ENCODE measurements at regions of chr22 and their contacts with region 1.

Region 1: DNA sequence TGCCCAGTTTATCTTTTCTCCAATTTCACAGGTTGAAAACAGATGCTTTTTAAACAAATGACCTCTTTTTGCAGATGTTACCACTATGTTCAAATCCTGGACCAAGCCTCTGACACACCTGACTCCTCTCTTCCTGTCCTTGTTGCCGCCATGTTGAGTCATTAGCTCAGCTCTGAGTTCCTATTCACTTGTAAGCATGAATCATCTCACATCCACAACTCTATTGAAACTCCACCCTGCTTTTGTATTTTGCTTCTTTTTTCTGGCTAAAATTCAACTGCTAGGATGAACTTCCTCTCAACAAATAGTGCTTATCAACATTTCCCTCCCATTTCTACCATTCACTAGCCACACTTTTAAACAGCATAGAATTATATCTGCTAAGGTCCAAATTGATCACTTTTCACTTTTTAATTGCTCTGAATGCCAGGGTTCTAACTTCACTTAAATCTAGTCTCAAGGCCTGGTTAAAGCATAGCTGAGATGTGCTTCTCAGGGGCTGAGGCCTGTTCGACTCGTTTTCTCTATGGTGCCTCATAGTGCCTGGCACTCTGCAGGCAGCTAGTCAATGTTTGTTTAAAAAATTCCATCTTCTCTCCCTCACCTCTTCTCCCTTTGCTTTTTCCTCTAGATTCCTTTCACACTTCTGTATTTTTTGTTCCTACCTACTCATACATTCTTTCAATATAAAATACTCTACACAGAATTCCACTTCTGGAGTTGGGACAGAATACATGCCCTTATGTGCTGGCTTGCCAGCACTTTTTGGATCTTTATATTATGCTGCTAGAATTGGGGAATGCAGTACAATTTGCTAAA is 3.9 kb downstream of the JOSD1 start:
- DNase-seq: peak; percentile 73
- ATAC-seq: peak; percentile 74
- H3K4me3 Mint-ChIP-seq: peak overlapping the region; percentile 95
- H3K27ac Mint-ChIP-seq: peak overlapping the region; percentile 95
- H3K4me1 Mint-ChIP-seq: peaks cover 58% of the 10 kb centered on the region
- H3K27me3 Mint-ChIP-seq: no peaks in the 10 kb centered on the region

Region 2: DNA sequence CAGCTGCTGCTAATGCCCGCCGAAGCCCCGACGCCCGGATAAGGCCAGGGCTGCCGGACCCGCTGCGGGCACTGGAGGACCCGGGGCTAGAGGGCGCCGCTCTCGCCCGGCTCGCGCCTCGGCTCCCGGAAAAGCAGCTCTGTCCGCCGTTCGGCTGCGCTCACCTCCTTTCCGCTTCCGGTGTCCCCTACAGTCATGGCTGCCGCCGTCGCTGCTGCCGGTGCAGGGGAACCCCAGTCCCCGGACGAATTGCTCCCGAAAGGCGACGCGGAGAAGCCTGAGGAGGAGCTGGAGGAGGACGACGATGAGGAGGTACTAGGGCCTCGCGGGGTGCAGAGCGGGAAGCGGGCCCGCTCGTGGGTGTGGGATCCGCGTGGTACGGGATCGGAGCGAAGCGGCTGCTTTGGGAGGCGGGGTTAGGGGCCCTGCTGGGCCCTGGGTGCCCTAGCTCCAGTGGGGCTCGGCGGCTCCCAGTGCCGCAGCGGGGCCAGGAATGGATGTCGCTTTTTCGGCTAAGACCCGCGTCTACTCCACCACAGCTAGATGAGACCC is 15.0 kb before region 1 on chr22 and contains the start of gene TOMM22:
- CTCF ChIA-PET with region 1: interaction called, 34 read pairs
- POLR2A ChIA-PET with region 1: interaction called, 13 read pairs
- intact Hi-C with region 1: loop called (anchors 1 to 2 kb)
- DNase-seq: peak; percentile 92
- ATAC-seq: peak; percentile 98
- H3K4me3 Mint-ChIP-seq: peak within 1 kb of the TSS; percentile 90
- H3K27ac Mint-ChIP-seq: peak within 1 kb of the TSS; percentile 98
- H3K4me1 Mint-ChIP-seq: peaks cover 20% of the 10 kb centered on the region
- H3K27me3 Mint-ChIP-seq: no peaks in the 10 kb centered on the region
- total RNA-seq, gene TOMM22: 146 to 155 TPM

Region 3: DNA sequence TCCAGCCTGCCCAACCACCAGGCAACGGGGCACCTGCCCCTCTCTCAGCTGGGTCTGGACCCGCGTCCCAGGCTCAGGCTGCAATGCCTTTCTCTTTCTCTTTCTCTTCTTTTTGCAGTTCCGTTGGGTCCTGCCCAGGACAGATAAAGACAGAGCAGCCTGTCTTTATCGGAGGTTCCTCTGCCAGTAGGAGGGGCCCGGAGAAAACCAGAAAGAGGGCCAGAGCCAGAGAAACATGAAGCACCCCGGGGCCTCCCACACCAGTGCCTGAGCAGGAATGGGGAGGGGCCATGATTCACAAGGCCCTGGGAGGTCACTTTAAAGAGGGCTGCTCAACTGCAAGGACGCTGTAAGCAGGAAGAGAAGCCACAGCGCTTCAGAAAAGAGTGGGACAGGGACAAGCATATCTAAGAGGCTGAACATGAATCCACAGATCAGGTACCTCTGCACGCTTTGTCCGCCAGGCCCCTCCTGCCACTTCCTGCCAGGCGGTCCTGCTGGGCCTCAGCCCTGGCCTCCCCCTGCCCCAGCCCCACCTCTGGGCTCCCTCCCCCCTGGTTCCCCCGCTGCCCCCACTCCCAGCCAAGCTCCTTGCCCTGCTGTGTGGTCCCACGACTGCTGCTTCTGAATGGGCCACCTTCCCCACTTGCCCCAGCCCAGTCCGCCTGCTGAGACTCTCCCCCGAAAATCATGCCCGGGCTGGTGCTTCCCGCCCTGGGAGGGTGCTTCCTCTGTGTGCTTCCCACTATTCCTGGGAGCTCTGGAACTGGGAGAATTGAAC is 317.3 kb after region 1 on chr22 and contains the start of gene APOBEC3C:
- CTCF ChIA-PET with region 1: no interaction called
- POLR2A ChIA-PET with region 1: no interaction called
- intact Hi-C with region 1: no loop called
- DNase-seq: peak; percentile 89
- ATAC-seq: peak; percentile 96
- H3K4me3 Mint-ChIP-seq: peak within 1 kb of the TSS; percentile 93
- H3K27ac Mint-ChIP-seq: peak within 1 kb of the TSS; percentile 95
- H3K4me1 Mint-ChIP-seq: peaks cover 33% of the 10 kb centered on the region
- H3K27me3 Mint-ChIP-seq: no peaks in the 10 kb centered on the region
- total RNA-seq, gene APOBEC3C: 75.3 to 98.5 TPM

Region 4: GRCh38 chr22:39197396-39197977 is 500.7 kb after region 1 on chr22:
- CTCF ChIA-PET with region 1: no interaction called
- POLR2A ChIA-PET with region 1: no interaction called
- intact Hi-C with region 1: no loop called
- DNase-seq: no peak
- ATAC-seq: no peak
- H3K4me3 Mint-ChIP-seq: no peak overlapping the region
- H3K27ac Mint-ChIP-seq: no peak overlapping the region
- H3K4me1 Mint-ChIP-seq: no peaks in the 10 kb centered on the region
- H3K27me3 Mint-ChIP-seq: peaks cover 2% of the 10 kb centered on the region

Measured in activated CD4-positive, alpha-beta T cell treated with anti-CD3 and anti-CD28 coated beads for 36 hours (primary cell).